ENCODE measurements at regions of chr18 and their contacts with region 1.

Region 1: GRCh38 chr18:961644-962355 is 57.1 kb downstream of the ADCYAP1 start:
- DNase-seq: peak in 1 of 3 donors; percentile 55
- ATAC-seq: no peak
- H3K4me3 ChIP-seq: peak overlapping the region; percentile 66
- H3K27ac ChIP-seq: no peak overlapping the region
- H3K4me1 ChIP-seq: no peaks in the 10 kb centered on the region
- H3K27me3 ChIP-seq: no peaks in the 10 kb centered on the region

Region 2: GRCh38 chr18:864872-865273 is 96.9 kb before region 1 on chr18:
- intact Hi-C with region 1: loop called in 1 of 4 experiments (anchors 5 kb)
- DNase-seq: peak; percentile 66 to 84 (median 81)
- ATAC-seq: peak; percentile 86
- H3K4me3 ChIP-seq: no peak overlapping the region
- H3K27ac ChIP-seq: no peak overlapping the region
- H3K4me1 ChIP-seq: no peaks in the 10 kb centered on the region
- H3K27me3 ChIP-seq: peaks cover 2% of the 10 kb centered on the region

Region 3: DNA sequence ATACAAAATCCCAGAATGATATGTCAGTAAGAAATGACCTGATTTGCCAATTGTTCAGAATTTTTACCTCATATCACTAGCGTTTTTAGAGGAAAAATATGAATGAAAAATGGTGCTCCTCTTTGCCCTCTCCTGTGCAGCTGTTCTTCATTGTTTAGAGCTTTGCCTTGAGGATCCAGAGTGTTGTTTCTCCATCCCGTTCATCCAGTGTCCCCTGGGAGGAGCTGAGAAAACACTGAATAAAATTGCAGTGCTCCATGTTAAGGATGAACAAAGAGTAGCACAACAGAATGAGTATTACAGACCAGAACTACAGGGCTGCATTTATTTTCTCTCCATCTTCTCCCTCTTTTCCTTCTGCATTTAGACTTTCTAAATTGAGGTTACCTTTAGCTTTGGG is 76.0 kb after region 1 on chr18:
- intact Hi-C with region 1: no loop called
- DNase-seq: no peak
- ATAC-seq: no peak
- H3K4me3 ChIP-seq: no peak overlapping the region
- H3K27ac ChIP-seq: no peak overlapping the region
- H3K4me1 ChIP-seq: no peaks in the 10 kb centered on the region
- H3K27me3 ChIP-seq: no peaks in the 10 kb centered on the region

Region 4: GRCh38 chr18:1304392-1304974 is 342.7 kb after region 1 on chr18:
- intact Hi-C with region 1: no loop called
- DNase-seq: no peak
- ATAC-seq: no peak
- H3K4me3 ChIP-seq: no peak overlapping the region
- H3K27ac ChIP-seq: no peak overlapping the region
- H3K4me1 ChIP-seq: no peaks in the 10 kb centered on the region
- H3K27me3 ChIP-seq: no peaks in the 10 kb centered on the region

Measured in right cardiac atrium (tissue), 5 donors.